ENCODE measurements at regions of chr12 and their contacts with region 1.

Region 1: DNA sequence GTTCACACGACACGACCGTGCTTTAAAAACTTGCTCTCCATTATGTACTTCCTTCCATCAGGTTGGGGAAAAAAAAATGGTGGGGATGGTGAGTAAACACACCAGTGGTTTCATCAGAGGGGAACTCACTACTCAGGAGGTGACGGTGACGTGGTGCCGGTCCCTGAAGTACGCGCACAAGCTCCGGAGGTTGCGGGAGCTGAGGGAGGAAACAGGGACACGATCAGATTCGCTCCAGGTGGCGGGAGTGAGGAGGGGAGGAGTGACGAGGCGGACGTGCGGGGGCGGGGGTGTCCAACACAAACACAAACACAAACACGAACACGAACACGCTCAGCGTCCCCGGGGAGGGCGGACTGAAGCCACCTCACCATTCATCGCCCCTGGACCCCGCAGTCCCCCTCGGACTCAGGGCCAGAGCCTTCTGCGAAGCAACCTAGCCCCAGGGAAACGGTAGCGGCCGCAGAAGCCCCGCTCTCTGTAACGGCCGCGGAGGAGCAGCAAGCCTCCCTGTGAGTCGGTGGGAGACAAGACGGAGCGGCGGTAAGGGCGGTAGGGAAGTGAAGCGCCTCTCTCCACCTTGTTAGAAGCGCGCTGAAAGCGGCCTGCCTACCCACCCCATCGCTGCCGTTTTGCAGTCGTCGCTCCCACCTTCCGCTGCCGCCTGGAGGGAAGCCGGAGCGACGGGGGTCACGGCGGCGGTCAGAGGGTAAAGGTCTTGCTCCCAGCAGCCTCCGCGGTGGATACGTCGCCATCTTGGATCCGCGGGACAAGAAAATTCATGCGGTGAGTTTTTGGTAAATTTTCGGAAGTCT is at the start of gene CNOT2:
- DNase-seq: peak; percentile 79 to 96 (median 91)
- ATAC-seq: peak; percentile 78
- H3K4me3 ChIP-seq: peak within 1 kb of the TSS; percentile 94 to 96
- H3K4me3 Mint-ChIP-seq: peak within 1 kb of the TSS; percentile 100
- H3K27ac ChIP-seq: peak within 1 kb of the TSS; percentile 97 to 99
- H3K27ac Mint-ChIP-seq: peak within 1 kb of the TSS; percentile 100
- H3K4me1 ChIP-seq: peaks cover 57% of the 10 kb centered on the region
- H3K4me1 Mint-ChIP-seq: peaks cover 60% of the 10 kb centered on the region
- H3K27me3 ChIP-seq: no peaks in the 10 kb centered on the region
- H3K27me3 Mint-ChIP-seq: no peaks in the 10 kb centered on the region
- CTCF ChIP-seq: no peak
- total RNA-seq, gene CNOT2: 154 to 158 TPM

Region 2: GRCh38 chr12:69470189-69471075 is 772.5 kb before region 1 on chr12 and contains the start of gene FRS2:
- CTCF ChIA-PET with region 1: no interaction called
- POLR2A ChIA-PET with region 1: no interaction called
- intact Hi-C with region 1: loop called in 1 of 2 experiments (anchors 2 kb)
- DNase-seq: peak; percentile 66 to 91 (median 84)
- ATAC-seq: peak; percentile 97
- H3K4me3 ChIP-seq: peak within 1 kb of the TSS; percentile 86 to 88
- H3K4me3 Mint-ChIP-seq: peak within 1 kb of the TSS; percentile 98
- H3K27ac ChIP-seq: peak within 1 kb of the TSS; percentile 76 to 82
- H3K27ac Mint-ChIP-seq: peak within 1 kb of the TSS; percentile 97
- H3K4me1 ChIP-seq: peaks cover 30% of the 10 kb centered on the region
- H3K4me1 Mint-ChIP-seq: peaks cover 46% of the 10 kb centered on the region
- H3K27me3 ChIP-seq: no peaks in the 10 kb centered on the region
- H3K27me3 Mint-ChIP-seq: no peaks in the 10 kb centered on the region
- CTCF ChIP-seq: no peak
- total RNA-seq, gene FRS2: 31.1 to 32.4 TPM

Region 3: GRCh38 chr12:69738351-69739286 is 504.3 kb before region 1 on chr12 and contains the start of gene RAB3IP:
- CTCF ChIA-PET with region 1: no interaction called
- POLR2A ChIA-PET with region 1: no interaction called
- intact Hi-C with region 1: loop called (anchors 2 kb)
- DNase-seq: peak; percentile 84 to 95 (median 93)
- ATAC-seq: peak; percentile 87
- H3K4me3 ChIP-seq: peak within 1 kb of the TSS; percentile 64 to 79
- H3K4me3 Mint-ChIP-seq: peak within 1 kb of the TSS; percentile 82
- H3K27ac ChIP-seq: peak within 1 kb of the TSS; percentile 73
- H3K27ac Mint-ChIP-seq: peak within 1 kb of the TSS; percentile 69
- H3K4me1 ChIP-seq: peaks cover 11% of the 10 kb centered on the region
- H3K4me1 Mint-ChIP-seq: peaks cover 24% of the 10 kb centered on the region
- H3K27me3 ChIP-seq: no peaks in the 10 kb centered on the region
- H3K27me3 Mint-ChIP-seq: peaks cover 4% of the 10 kb centered on the region
- CTCF ChIP-seq: peak; percentile 89
- total RNA-seq, gene RAB3IP: 14.8 to 15.1 TPM

Region 4: GRCh38 chr12:70365648-70366518 is 123.0 kb after region 1 on chr12 and contains the start of gene KCNMB4:
- CTCF ChIA-PET with region 1: no interaction called
- POLR2A ChIA-PET with region 1: interaction called, 9 read pairs
- intact Hi-C with region 1: loop called (anchors 1 to 2 kb)
- DNase-seq: peak; percentile 16 to 81 (median 67)
- ATAC-seq: peak; percentile 70
- H3K4me3 ChIP-seq: peak within 1 kb of the TSS; percentile 72 to 79
- H3K4me3 Mint-ChIP-seq: peak within 1 kb of the TSS; percentile 95
- H3K27ac ChIP-seq: peak within 1 kb of the TSS in 1 of 2 experiments; percentile 34
- H3K27ac Mint-ChIP-seq: peak within 1 kb of the TSS; percentile 91
- H3K4me1 ChIP-seq: peaks cover 22% of the 10 kb centered on the region
- H3K4me1 Mint-ChIP-seq: peaks cover 31% of the 10 kb centered on the region
- H3K27me3 ChIP-seq: no peaks in the 10 kb centered on the region
- H3K27me3 Mint-ChIP-seq: no peaks in the 10 kb centered on the region
- CTCF ChIP-seq: no peak
- total RNA-seq, gene KCNMB4: 0.73 to 1.4 TPM

Measured in CD8-positive, alpha-beta T cell (primary cell).